Dendritic cell treated with granulocyte-macrophage colony-stimulating factor and Interleukin-4, amounts not matched to agents 40 ng/mL and 50 ng/mL, for 4 days (primary cell): ENCODE measurements at regions of chr6 and their contacts with region 1.

Region 1: GRCh38 chr6:18323935-18324705 is 59.8 kb upstream of the DEK start:
- H3K4me3 Mint-ChIP-seq: no peak overlapping the region
- H3K27ac Mint-ChIP-seq: peak overlapping the region; percentile 63
- H3K4me1 Mint-ChIP-seq: peaks cover 51% of the 10 kb centered on the region
- H3K27me3 Mint-ChIP-seq: no peaks in the 10 kb centered on the region

Region 2: DNA sequence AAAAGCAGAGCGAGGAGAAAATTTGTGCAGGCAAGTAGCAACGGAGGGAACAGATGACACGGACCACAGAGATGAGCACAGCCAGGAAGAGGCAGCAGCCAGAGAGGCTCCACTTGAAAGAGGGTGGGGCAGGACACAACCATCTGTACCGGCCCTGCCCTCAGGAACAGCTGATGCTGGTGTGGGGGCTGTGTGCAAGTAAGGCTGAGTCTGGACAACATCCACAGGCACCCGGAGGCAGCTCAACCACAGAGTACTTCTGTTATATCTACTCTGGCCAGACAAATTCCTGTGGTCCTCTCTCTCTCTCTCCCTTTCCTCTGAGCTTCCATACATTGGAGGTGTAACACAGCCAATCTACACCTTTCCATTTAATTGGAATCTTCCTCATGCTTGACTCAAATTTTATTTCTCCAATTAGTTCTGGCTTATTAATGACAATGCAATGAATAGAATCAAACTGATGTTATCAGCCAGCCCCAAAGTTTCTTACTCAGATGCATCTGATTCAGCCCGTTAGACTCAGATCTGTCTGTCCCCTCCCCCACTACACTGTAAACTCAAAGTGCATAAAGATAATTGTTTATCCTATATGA is 361.6 kb before region 1 on chr6:
- intact Hi-C with region 1: no loop called
- H3K4me3 Mint-ChIP-seq: no peak overlapping the region
- H3K27ac Mint-ChIP-seq: peak overlapping the region; percentile 38
- H3K4me1 Mint-ChIP-seq: peaks cover 18% of the 10 kb centered on the region
- H3K27me3 Mint-ChIP-seq: no peaks in the 10 kb centered on the region

Region 3: GRCh38 chr6:18211338-18211737 is 112.8 kb before region 1 on chr6:
- intact Hi-C with region 1: no loop called
- H3K4me3 Mint-ChIP-seq: no peak overlapping the region
- H3K27ac Mint-ChIP-seq: no peak overlapping the region
- H3K4me1 Mint-ChIP-seq: peaks cover 22% of the 10 kb centered on the region
- H3K27me3 Mint-ChIP-seq: no peaks in the 10 kb centered on the region

Region 4: DNA sequence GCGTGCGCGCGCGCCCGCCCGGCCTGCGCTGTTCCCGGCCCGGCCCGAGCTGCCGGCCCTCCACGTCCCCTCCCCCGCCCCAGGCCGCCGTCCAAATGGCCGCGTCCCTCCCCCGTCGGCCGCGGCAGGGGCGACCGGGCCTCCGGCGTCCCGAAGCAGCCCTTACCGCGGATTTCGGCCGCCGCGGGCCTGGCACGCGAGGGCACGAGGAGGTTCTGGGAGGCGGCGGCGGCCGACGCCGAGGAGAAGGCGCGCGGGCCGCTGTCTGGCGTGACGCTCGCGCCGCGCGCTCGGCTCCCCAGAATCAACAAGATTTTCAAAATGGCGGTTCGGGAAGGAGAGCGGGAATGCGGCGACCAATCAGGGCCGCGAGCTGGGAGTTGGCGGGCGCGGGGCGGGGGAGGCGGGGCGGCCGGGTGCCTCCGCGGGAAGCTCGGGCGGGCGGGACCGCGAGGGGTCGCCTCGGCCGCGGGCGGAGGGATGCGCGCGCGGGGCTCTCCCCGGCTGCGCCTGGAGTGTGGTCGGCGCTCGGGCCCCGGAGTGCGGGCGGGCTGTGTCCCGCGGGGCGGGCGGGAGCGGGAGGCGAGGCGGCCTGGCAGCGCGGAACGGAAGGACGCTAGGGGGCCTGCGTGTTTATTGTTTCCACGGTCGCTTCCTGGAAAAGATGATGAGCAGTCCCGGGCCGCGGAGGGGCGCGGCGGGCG is 59.7 kb before region 1 on chr6 and contains the start of gene DEK:
- intact Hi-C with region 1: loop called (anchors 5 kb)
- H3K4me3 Mint-ChIP-seq: peak within 1 kb of the TSS; percentile 98
- H3K27ac Mint-ChIP-seq: peak within 1 kb of the TSS; percentile 96
- H3K4me1 Mint-ChIP-seq: peaks cover 40% of the 10 kb centered on the region
- H3K27me3 Mint-ChIP-seq: no peaks in the 10 kb centered on the region